Mammary epithelial cell (primary cell): ENCODE measurements at regions of chr1 and their contacts with region 1.

Region 1: GRCh38 chr1:30718636-30719405 is 4.6 kb downstream of the MATN1 start:
- DNase-seq: peak; percentile 96
- H3K4me3 ChIP-seq: peak overlapping the region; percentile 65 to 78 (median 76)
- H3K27ac ChIP-seq: peak overlapping the region; percentile 86
- H3K4me1 ChIP-seq: peaks cover 20% of the 10 kb centered on the region
- H3K27me3 ChIP-seq: no peaks in the 10 kb centered on the region
- CTCF ChIP-seq: peak; percentile 69 to 91

Region 2: DNA sequence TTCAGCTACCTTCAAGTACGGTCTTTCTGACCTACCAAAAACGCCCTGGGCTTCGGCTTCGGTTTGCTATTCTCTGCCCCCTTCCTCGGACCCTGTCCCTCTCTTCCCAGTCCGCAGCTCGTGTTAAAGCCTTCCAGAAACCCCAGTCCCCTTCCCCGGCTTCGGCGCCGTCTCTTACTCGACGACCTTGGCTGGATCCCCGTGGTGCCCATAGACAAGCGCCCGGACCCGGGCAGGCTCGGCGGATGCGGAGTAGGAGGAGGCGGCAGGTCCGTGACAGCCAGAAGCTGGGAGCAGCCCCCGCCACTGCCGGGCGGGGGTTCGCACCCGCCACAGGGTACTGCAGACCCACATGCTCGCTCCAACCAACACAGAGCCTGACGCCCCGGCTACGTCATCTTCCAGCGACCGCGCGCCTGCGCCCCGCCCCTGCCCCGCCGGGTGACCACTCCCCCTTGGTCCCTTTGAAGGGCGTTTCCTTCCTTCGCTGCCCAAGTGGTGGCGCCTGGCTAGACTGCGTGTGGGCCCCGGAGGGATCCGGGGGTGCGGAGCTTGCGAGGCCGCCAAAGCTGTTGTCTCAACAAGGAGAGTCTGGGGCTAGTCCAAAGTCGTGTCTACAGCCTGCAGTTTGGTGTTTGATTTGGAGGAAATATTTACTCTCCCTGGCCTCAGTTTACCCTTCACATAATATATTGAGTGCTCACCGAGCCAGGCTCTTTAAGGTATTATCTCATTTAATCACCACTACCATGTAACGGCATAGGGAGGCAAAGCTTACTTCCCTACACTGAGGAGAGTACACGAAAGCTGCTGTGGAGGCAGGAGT is 1488.1 kb before region 1 on chr1 and contains the start of gene MECR:
- CTCF ChIA-PET with region 1: no interaction called
- dilution Hi-C with region 1: no loop called
- in situ Hi-C with region 1: loop called (anchors 10 to 25 kb)
- intact Hi-C with region 1: no loop called
- DNase-seq: peak; percentile 85
- H3K4me3 ChIP-seq: peak within 1 kb of the TSS; percentile 75 to 96 (median 92)
- H3K27ac ChIP-seq: peak within 1 kb of the TSS; percentile 85
- H3K4me1 ChIP-seq: peaks cover 13% of the 10 kb centered on the region
- H3K27me3 ChIP-seq: no peaks in the 10 kb centered on the region
- CTCF ChIP-seq: peak in 1 of 2 donors; percentile 33
- total RNA-seq, gene MECR: 28.7 to 35.4 TPM

Region 3: DNA sequence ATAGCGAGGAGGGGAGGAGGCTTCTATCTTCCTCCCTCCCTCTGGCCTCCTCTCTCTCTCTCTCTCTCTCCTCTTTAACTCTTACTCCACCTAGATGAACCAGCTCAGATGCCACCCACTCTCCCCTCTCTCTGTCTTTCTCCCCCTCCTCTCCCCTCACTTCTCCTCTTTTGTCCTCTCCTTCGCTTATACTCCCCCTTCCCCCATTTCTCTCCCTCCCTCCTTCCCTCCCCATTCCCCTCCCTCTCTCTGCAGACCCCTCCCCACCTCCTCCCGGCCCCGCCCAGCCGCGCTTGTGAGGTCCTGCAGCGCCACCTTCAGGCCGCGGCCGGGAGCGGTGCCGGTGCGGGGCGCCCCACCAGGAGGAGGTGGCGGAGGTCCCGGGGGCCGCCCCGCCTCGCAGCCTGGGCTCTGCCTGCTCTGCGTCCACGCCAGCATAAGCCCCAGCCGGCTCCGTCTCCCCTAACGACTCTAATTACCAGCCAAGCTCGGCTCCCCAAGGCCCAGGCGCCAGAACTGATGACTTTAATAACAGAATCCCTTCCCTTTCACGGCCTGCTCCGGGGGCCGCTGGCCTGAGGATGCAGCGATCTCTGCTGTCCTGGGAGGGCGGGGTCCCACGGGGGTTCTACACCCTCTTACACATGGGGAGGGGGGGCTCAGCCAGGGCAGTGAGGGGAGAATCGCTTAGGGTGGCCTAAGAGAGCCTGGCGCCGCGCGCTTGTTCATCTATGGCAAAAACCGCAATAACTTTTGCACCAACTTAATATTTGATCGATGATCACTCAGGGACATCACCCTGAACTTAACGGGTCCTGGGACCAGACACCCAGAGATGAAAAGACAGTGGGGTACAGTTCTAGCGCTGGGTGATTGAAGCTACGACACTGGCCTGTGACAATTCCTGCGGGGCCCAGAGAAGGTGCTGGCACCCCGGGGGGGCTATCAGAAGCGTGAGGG is 632.7 kb before region 1 on chr1:
- CTCF ChIA-PET with region 1: no interaction called
- dilution Hi-C with region 1: no loop called
- in situ Hi-C with region 1: loop called in 1 of 2 experiments (anchors 25 kb)
- intact Hi-C with region 1: no loop called
- DNase-seq: no peak
- H3K4me3 ChIP-seq: no peak overlapping the region
- H3K27ac ChIP-seq: no peak overlapping the region
- H3K4me1 ChIP-seq: peaks cover 14% of the 10 kb centered on the region
- H3K27me3 ChIP-seq: no peaks in the 10 kb centered on the region
- CTCF ChIP-seq: peak; percentile 38 to 73

Region 4: DNA sequence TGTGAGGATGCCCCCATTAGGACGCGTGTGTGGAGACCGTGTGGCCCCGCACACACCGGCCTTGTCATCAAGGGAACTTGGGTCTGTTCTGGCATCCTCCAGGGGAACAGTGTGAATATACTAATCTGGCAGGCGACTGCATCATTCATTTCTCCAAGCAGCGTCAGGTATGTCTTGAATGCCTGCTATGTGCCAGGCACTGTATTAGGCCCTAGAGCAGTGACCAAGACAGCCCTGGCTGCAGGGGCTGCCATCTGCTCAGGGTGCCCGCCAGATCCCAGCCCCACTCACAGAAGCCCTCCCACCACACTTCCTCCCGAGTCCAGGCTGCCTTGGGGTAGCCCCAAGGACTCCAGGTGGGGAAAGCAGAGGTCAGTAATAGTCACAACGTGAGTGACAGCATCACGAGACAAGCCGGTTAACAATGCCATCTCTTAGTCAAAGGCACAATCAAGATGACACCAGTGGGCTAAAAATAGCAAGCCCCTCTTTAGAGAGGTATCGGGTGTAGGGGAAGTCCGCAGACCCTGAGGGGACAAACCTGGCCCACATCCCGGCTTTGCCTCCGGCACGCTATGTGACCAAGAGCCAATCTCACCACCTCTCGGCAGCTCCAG is 46.2 kb after region 1 on chr1:
- CTCF ChIA-PET with region 1: interaction called, 3 read pairs
- dilution Hi-C with region 1: loop called (anchors 5 kb)
- in situ Hi-C with region 1: no loop called
- intact Hi-C with region 1: no loop called
- DNase-seq: no peak
- H3K4me3 ChIP-seq: no peak overlapping the region
- H3K27ac ChIP-seq: no peak overlapping the region
- H3K4me1 ChIP-seq: no peaks in the 10 kb centered on the region
- H3K27me3 ChIP-seq: no peaks in the 10 kb centered on the region
- CTCF ChIP-seq: no peak

Region 5: GRCh38 chr1:30823969-30824735 is 105.3 kb after region 1 on chr1:
- CTCF ChIA-PET with region 1: no interaction called
- dilution Hi-C with region 1: loop called (anchors 5 kb)
- in situ Hi-C with region 1: no loop called
- intact Hi-C with region 1: no loop called
- DNase-seq: peak; percentile 98
- H3K4me3 ChIP-seq: peak overlapping the region; percentile 38 to 58 (median 55)
- H3K27ac ChIP-seq: peak overlapping the region; percentile 64
- H3K4me1 ChIP-seq: peaks cover 19% of the 10 kb centered on the region
- H3K27me3 ChIP-seq: peaks cover 4% of the 10 kb centered on the region
- CTCF ChIP-seq: no peak

Region 6: DNA sequence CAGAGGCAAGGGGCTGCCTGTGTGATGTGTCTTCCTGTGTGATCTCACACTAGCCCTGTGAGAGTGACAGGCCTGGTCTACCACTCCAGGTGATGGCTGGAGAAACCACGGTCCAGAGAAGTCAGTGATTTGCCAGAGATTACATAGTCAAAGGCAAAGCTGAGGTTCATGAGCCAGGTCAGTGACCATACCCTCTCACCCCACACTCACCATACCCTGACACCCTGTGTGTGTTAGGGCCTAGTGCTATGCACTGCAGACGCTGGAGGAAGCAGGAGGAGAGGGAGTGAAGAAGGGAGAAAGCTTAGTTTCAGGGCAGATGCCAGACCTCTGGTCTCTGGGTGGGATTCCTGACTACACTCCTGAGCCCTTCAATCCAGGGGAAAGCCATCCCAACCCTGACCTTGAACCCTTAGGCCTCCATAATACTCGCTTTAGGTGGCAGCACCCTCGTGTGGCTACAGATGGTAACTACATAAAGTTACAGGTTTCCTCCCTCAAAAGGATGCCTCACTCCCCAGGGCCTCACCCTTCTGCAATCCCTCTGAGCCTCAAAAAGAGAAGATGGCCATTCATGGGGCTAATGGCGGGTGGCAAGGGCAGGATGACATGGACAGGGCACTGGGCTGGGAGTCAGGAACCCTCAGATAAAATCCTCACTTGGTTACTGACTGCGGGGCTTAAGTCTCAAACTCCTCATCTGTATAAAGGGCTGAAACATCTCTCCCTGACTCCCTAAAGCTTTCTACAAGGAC is 210.5 kb after region 1 on chr1:
- CTCF ChIA-PET with region 1: no interaction called
- dilution Hi-C with region 1: no loop called
- in situ Hi-C with region 1: no loop called
- intact Hi-C with region 1: loop called (anchors 2 kb)
- DNase-seq: peak; percentile 55
- H3K4me3 ChIP-seq: no peak overlapping the region
- H3K27ac ChIP-seq: no peak overlapping the region
- H3K4me1 ChIP-seq: peaks cover 27% of the 10 kb centered on the region
- H3K27me3 ChIP-seq: no peaks in the 10 kb centered on the region
- CTCF ChIP-seq: peak; percentile 60 to 73